ENCODE measurements at regions of chr4 and their contacts with region 1.

Region 1: GRCh38 chr4:111136438-111136837 is 513.6 kb upstream of the PITX2 start:
- DNase-seq: peak; percentile 10
- H3K4me3 Mint-ChIP-seq: no peak overlapping the region
- H3K27ac Mint-ChIP-seq: no peak overlapping the region
- H3K4me1 Mint-ChIP-seq: no peaks in the 10 kb centered on the region
- H3K27me3 Mint-ChIP-seq: no peaks in the 10 kb centered on the region
- CTCF ChIP-seq: no peak

Region 2: DNA sequence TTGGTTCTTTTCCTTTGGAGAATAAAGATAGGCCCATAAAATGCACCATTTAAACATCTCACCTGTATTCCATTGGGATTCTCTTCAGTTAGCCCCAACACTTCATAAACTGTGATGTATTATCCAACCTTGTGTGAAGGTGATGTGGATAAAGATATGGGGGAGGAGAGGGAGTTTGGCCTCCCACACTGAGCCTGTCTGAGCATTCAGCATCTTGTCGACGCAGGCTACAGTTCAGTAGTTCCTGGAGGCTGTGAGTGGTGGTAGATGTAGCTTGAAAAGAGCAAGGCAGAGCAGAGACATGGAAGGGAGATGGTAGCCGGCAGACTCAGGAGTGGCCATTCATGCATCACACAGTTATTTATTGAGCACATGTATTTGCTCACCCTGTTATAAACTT is 221.1 kb before region 1 on chr4:
- CTCF ChIA-PET with region 1: no interaction called
- intact Hi-C with region 1: no loop called
- DNase-seq: no peak
- H3K4me3 Mint-ChIP-seq: no peak overlapping the region
- H3K27ac Mint-ChIP-seq: no peak overlapping the region
- H3K4me1 Mint-ChIP-seq: no peaks in the 10 kb centered on the region
- H3K27me3 Mint-ChIP-seq: no peaks in the 10 kb centered on the region
- CTCF ChIP-seq: no peak

Region 3: GRCh38 chr4:111064342-111064993 is 72.0 kb before region 1 on chr4:
- CTCF ChIA-PET with region 1: no interaction called
- intact Hi-C with region 1: no loop called
- DNase-seq: no peak
- H3K4me3 Mint-ChIP-seq: no peak overlapping the region
- H3K27ac Mint-ChIP-seq: no peak overlapping the region
- H3K4me1 Mint-ChIP-seq: no peaks in the 10 kb centered on the region
- H3K27me3 Mint-ChIP-seq: no peaks in the 10 kb centered on the region
- CTCF ChIP-seq: no peak

Region 4: DNA sequence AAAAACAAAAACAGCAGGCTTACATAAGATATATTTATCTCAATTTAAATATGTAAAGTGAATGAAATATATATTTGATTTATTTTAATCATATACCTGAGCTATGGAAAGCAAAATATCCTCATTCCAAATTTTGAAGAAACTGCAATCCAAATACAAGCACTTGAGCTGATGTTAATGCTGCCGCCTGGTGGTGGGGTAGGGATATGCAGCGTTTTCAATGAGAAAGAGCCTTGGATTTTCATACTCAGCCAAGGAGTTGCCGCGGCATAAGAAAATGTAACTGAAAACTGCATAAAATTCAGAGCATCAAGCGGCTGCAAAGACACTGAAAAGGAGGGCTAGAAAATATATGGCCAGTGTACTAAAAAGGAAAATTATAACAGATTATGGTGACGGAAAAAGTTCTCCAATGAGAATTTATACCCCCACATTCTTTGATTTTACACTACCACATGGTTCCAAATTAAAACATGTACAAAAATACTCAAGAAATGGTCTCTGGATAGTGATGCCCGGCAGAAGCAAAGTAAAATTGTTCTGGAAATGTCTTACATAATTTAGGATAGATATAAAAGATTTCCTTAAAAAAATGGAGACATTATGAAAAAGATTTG is 146.7 kb after region 1 on chr4:
- CTCF ChIA-PET with region 1: no interaction called
- intact Hi-C with region 1: loop called (anchors 10 kb)
- DNase-seq: peak; percentile 72
- H3K4me3 Mint-ChIP-seq: no peak overlapping the region
- H3K27ac Mint-ChIP-seq: no peak overlapping the region
- H3K4me1 Mint-ChIP-seq: no peaks in the 10 kb centered on the region
- H3K27me3 Mint-ChIP-seq: no peaks in the 10 kb centered on the region
- CTCF ChIP-seq: peak; percentile 43

Region 5: GRCh38 chr4:111475001-111475400 is 338.6 kb after region 1 on chr4:
- CTCF ChIA-PET with region 1: interaction called, 4 read pairs
- intact Hi-C with region 1: loop called (anchors 2 kb)
- DNase-seq: peak; percentile 43
- H3K4me3 Mint-ChIP-seq: no peak overlapping the region
- H3K27ac Mint-ChIP-seq: no peak overlapping the region
- H3K4me1 Mint-ChIP-seq: no peaks in the 10 kb centered on the region
- H3K27me3 Mint-ChIP-seq: no peaks in the 10 kb centered on the region
- CTCF ChIP-seq: no peak

Region 6: GRCh38 chr4:111937368-111937767 is 800.9 kb after region 1 on chr4:
- CTCF ChIA-PET with region 1: no interaction called
- intact Hi-C with region 1: loop called (anchors 10 kb)
- DNase-seq: no peak
- H3K4me3 Mint-ChIP-seq: no peak overlapping the region
- H3K27ac Mint-ChIP-seq: no peak overlapping the region
- H3K4me1 Mint-ChIP-seq: no peaks in the 10 kb centered on the region
- H3K27me3 Mint-ChIP-seq: no peaks in the 10 kb centered on the region
- CTCF ChIP-seq: no peak

Measured in Calu3 (cell line).